OCI-LY7 (cell line): ENCODE measurements at regions of chr1 and their contacts with region 1.

Region 1: DNA sequence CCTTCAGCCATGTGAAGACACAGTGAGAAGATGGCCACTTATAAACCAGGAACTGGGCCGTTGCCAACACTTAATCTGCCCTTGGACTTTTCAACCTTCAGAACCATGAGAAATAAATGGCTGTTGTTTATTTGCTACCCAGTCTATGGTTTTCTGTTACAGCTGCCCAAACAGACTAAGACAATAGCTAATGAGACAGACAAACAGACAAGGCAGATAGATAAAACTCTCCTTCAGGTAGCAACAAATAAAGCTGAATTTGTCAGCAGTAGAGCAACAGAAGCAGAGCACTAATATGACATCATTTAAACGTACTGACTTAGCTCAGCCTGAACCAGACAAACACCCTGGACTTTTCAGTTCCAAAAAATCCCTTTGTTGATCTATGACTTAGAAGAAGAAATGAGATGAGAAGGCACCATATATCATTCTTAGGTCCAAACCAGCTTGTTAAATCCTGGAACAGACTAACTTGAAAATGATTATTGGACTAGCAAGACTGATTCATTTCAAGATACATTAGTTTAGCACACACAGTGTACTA is 27.0 kb downstream of the ZZZ3 start:
- DNase-seq: no peak
- H3K4me3 ChIP-seq: no peak overlapping the region
- H3K27ac ChIP-seq: no peak overlapping the region
- H3K4me1 ChIP-seq: peaks cover 10% of the 10 kb centered on the region
- CTCF ChIP-seq: no peak

Region 2: DNA sequence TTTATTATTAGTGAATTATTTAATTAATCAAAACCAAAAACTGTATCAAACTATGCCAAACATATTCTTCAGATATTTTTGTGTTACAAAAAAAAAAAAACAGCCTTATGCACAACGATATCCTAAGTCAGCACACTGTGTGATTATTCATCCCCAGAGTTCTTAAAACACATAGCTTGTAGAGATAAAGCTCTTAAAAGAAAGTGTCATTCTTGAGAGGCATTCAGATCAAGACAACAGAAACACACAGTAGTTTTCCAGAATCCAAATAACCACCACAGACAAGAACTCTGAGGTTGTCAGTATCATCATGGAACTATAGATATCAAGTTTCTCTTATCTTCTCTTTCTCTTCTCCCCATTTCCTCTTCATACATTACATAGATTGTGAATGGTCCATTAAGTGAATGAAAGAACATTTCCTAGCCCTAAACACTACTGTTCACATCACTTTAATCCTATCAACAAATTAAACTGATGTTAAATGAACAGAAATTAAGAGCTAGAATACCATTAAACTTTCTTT is 13.5 kb after region 1 on chr1:
- CTCF ChIA-PET with region 1: no interaction called
- POLR2A ChIA-PET with region 1: interaction called, 12 read pairs
- intact Hi-C with region 1: no loop called
- DNase-seq: no peak
- H3K4me3 ChIP-seq: no peak overlapping the region
- H3K27ac ChIP-seq: no peak overlapping the region
- H3K4me1 ChIP-seq: peaks cover 45% of the 10 kb centered on the region
- CTCF ChIP-seq: no peak

Region 3: GRCh38 chr1:77732090-77732489 is 76.6 kb after region 1 on chr1:
- CTCF ChIA-PET with region 1: no interaction called
- POLR2A ChIA-PET with region 1: no interaction called
- intact Hi-C with region 1: no loop called
- DNase-seq: no peak
- H3K4me3 ChIP-seq: no peak overlapping the region
- H3K27ac ChIP-seq: no peak overlapping the region
- H3K4me1 ChIP-seq: no peaks in the 10 kb centered on the region
- CTCF ChIP-seq: no peak